HCT116 (cell line): ENCODE measurements at regions of chr11 and their contacts with region 1.

Region 1: GRCh38 chr11:17230867-17231851 is 23.4 kb upstream of the PIK3C2A start:
- DNase-seq: no peak
- ATAC-seq: no peak
- H3K4me3 ChIP-seq: no peak overlapping the region
- H3K27ac ChIP-seq: no peak overlapping the region
- H3K4me1 ChIP-seq: no peaks in the 10 kb centered on the region; a peak in 1 of 4 replicates
- H3K27me3 ChIP-seq: no peaks in the 10 kb centered on the region
- CTCF ChIP-seq: no peak
- POLR2A ChIP-seq: no peak
- RAD21 ChIP-seq: no peak

Region 2: GRCh38 chr11:17219016-17219415 is 12.1 kb before region 1 on chr11:
- CTCF ChIA-PET with region 1: no interaction called
- POLR2A ChIA-PET with region 1: no interaction called
- RAD21 ChIA-PET with region 1: no interaction called
- intact Hi-C with region 1: no loop called
- DNase-seq: no peak
- ATAC-seq: no peak
- H3K4me3 ChIP-seq: no peak overlapping the region
- H3K27ac ChIP-seq: no peak overlapping the region
- H3K4me1 ChIP-seq: peaks cover 3 to 14% of the 10 kb centered on the region in 2 experiments; a peak in 2 of 4 replicates
- H3K27me3 ChIP-seq: no peaks in the 10 kb centered on the region
- CTCF ChIP-seq: no peak
- POLR2A ChIP-seq: no peak
- RAD21 ChIP-seq: no peak

Region 3: DNA sequence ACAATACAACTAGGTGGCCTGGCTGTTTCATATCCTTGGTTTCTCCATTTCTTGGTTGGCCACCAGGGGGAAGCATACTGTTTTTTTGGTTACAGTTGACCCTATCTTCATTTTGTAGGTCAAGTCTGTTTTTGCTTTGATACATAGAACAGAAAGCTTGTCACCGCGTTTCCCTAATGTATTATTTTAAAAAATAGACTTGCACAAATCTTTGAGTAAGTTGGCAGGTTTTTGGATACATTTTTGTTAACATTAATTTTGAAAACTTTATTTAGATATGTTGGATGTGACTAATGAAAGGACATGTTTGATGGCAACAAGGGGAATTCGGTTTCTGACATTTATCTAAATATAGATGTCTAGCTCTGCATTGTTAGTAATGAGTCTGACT is 123.4 kb after region 1 on chr11:
- CTCF ChIA-PET with region 1: interaction called, 6 read pairs
- POLR2A ChIA-PET with region 1: no interaction called
- RAD21 ChIA-PET with region 1: no interaction called
- intact Hi-C with region 1: loop called (anchors 10 kb)
- DNase-seq: peak; percentile 75
- ATAC-seq: peak; percentile 55
- H3K4me3 ChIP-seq: peak overlapping the region; percentile 60 to 71
- H3K27ac ChIP-seq: no peak overlapping the region
- H3K4me1 ChIP-seq: peaks cover 6 to 23% of the 10 kb centered on the region in 2 experiments; a peak in 3 of 4 replicates
- H3K27me3 ChIP-seq: no peaks in the 10 kb centered on the region
- CTCF ChIP-seq: peak; percentile 64 to 73 (median 71); a peak in 5 of 6 replicates
- POLR2A ChIP-seq: no peak
- RAD21 ChIP-seq: peak; percentile 55

Region 4: DNA sequence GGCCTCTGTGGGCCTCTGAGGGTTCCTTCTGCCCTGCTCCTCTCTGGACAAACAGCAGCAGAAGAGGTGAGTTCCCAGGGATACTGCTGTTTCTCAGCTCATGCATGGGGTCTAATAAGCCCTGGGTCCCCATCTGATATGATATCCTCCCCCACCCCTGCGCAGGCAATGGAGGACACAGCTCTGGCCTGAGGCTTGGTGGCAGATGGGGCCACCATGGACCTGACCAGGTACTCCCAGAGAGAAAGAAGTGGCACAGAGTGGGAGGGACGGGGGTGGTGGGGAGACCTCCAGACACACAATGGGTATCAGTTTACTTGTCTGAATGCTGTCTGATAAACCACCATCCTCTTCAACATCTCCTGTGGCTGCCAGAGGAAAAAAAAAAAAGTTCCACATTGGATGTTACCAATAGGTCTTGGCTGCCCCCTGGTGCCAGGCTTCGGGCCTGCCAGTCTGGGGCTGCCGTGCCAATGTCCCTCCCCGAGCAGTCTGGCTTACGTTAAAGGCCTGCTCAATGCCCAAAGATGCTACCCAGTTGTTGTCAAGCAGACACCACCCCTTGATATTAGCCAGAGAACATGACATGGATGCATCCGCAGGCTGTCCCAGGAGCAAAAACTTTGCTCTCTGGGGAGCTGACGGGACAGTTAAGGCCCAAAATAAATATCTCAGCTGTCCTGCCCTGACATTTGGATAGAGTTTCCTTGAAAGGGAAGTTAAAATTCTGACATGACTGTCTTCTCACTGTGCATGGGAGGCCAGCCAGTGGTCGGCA is 273.4 kb after region 1 on chr11:
- CTCF ChIA-PET with region 1: no interaction called
- POLR2A ChIA-PET with region 1: no interaction called
- RAD21 ChIA-PET with region 1: no interaction called
- intact Hi-C with region 1: loop called (anchors 1 kb)
- DNase-seq: peak; percentile 29
- ATAC-seq: peak; percentile 89
- H3K4me3 ChIP-seq: no peak overlapping the region
- H3K27ac ChIP-seq: no peak overlapping the region
- H3K4me1 ChIP-seq: peaks cover 5 to 12% of the 10 kb centered on the region in 2 experiments; a peak in 3 of 4 replicates
- H3K27me3 ChIP-seq: no peaks in the 10 kb centered on the region
- CTCF ChIP-seq: peak; percentile 91 to 92 (median 91)
- POLR2A ChIP-seq: no peak
- RAD21 ChIP-seq: peak; percentile 96

Region 5: GRCh38 chr11:17528181-17528691 is 297.1 kb after region 1 on chr11:
- CTCF ChIA-PET with region 1: interaction called, 12 read pairs
- POLR2A ChIA-PET with region 1: no interaction called
- RAD21 ChIA-PET with region 1: no interaction called
- intact Hi-C with region 1: loop called (anchors 2 kb)
- DNase-seq: no peak
- ATAC-seq: peak; percentile 99
- H3K4me3 ChIP-seq: no peak overlapping the region
- H3K27ac ChIP-seq: no peak overlapping the region
- H3K4me1 ChIP-seq: no peaks in the 10 kb centered on the region
- H3K27me3 ChIP-seq: no peaks in the 10 kb centered on the region
- CTCF ChIP-seq: peak; percentile 79 to 95 (median 92)
- POLR2A ChIP-seq: no peak
- RAD21 ChIP-seq: peak; percentile 80